ENCODE measurements at regions of chr5 and their contacts with region 1.

Region 1: DNA sequence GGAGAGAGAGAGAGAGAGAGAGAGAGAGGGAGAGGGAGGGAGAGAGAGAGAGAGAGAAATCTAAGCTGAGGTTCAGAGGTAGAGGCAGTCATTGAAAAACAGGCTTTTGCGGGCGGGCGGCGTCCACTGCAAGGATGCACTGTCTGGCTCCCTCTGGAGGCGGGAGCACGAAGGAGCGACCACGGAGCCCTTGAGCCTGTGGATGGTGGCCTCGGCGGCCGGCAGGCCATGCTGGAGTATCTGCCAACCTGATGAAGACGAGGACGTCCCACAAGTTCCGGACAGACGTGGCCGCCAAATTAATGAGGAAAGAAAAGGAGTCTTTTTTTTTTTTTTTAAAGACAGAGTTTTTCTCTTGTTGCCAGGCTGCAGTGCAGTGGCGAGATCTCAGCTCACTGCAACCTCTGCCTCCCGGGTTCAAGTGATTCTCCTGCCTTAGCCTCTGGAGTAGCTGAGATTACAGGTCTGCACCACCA is 2.2 kb upstream of the CCDC125 start:
- DNase-seq: peak; percentile 91 to 92
- H3K4me3 ChIP-seq: no peak overlapping the region
- H3K4me3 Mint-ChIP-seq: peak overlapping the region; percentile 7
- H3K27ac Mint-ChIP-seq: peak overlapping the region; percentile 19
- H3K4me1 ChIP-seq: peaks cover 30% of the 10 kb centered on the region
- H3K4me1 Mint-ChIP-seq: peaks cover 26% of the 10 kb centered on the region
- H3K27me3 ChIP-seq: no peaks in the 10 kb centered on the region
- H3K27me3 Mint-ChIP-seq: no peaks in the 10 kb centered on the region
- CTCF ChIP-seq: peak; percentile 80 to 95

Region 2: GRCh38 chr5:69024241-69024651 is 310.6 kb before region 1 on chr5:
- CTCF ChIA-PET with region 1: interaction called, 5 read pairs
- POLR2A ChIA-PET with region 1: no interaction called
- intact Hi-C with region 1: loop called (anchors 5 kb)
- DNase-seq: peak in 1 of 2 experiments; percentile 50
- H3K4me3 ChIP-seq: no peak overlapping the region
- H3K4me3 Mint-ChIP-seq: no peak overlapping the region
- H3K27ac Mint-ChIP-seq: no peak overlapping the region
- H3K4me1 ChIP-seq: no peaks in the 10 kb centered on the region
- H3K4me1 Mint-ChIP-seq: no peaks in the 10 kb centered on the region
- H3K27me3 ChIP-seq: no peaks in the 10 kb centered on the region
- H3K27me3 Mint-ChIP-seq: peaks cover 9% of the 10 kb centered on the region
- CTCF ChIP-seq: peak; percentile 59 to 72

Region 3: GRCh38 chr5:69189162-69190086 is 145.4 kb before region 1 on chr5 and contains the start of gene CENPH:
- CTCF ChIA-PET with region 1: interaction called, 4 read pairs
- POLR2A ChIA-PET with region 1: interaction called, 4 read pairs
- intact Hi-C with region 1: loop called (anchors 1 kb)
- DNase-seq: peak; percentile 93 to 96
- H3K4me3 ChIP-seq: peak within 1 kb of the TSS; percentile 87
- H3K4me3 Mint-ChIP-seq: peak within 1 kb of the TSS; percentile 96
- H3K27ac Mint-ChIP-seq: peak within 1 kb of the TSS; percentile 100
- H3K4me1 ChIP-seq: no peaks in the 10 kb centered on the region
- H3K4me1 Mint-ChIP-seq: no peaks in the 10 kb centered on the region
- H3K27me3 ChIP-seq: no peaks in the 10 kb centered on the region
- H3K27me3 Mint-ChIP-seq: no peaks in the 10 kb centered on the region
- CTCF ChIP-seq: no peak
- total RNA-seq, gene CENPH: 30.2 and 32.4 TPM in 2 replicates

Region 4: DNA sequence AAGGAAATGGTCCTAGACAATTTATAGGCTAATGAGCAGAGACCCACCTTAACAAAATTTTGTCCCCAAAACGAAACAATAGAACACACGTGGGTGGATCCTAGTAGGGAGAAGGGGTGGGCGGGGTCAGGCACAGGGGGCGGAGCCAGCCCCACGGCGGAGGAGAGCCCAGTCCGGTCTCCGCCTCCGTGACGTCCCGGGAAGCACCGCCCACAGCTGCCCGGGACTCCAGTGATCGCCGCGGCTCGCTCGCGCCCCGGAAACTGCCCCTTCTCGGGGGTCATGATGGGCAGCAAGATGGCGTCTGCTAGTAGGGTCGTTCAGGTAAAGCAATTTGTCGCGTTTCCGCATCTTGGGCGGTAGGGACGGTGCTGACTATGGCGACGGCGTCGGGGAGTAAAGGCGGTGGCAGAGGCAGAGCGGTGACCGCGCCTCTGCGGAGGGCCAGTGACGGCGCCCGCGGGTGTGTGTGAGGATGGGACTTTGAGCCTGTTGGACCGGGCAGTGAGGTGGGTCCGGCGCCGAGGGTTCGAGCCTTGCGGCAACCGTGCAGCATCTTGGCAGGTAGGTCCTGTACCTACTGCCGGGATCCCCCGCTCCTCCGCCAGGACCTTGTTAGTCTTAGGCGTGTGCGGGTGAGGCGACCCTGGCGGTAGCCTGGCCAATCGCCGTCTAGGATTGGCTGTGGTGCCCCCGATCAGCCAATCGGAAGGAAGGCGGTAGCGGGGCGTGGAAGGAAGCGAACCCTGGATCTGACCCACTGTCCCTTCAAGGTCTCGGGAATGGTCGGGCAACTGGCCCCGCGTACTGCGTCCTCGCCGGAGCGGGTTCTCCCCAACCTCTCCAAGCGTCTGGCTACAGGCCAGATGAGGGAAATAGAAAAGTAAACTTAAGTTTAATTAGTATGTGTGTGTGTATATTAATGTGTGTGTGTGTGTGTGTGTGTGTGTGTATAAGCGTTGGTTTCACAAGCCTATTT is 117.0 kb before region 1 on chr5:
- CTCF ChIA-PET with region 1: no interaction called
- POLR2A ChIA-PET with region 1: no interaction called
- intact Hi-C with region 1: loop called (anchors 5 kb)
- DNase-seq: peak; percentile 95 to 97
- H3K4me3 ChIP-seq: peak overlapping the region; percentile 82
- H3K4me3 Mint-ChIP-seq: peak overlapping the region; percentile 97
- H3K27ac Mint-ChIP-seq: peak overlapping the region; percentile 96
- H3K4me1 ChIP-seq: peaks cover 16% of the 10 kb centered on the region
- H3K4me1 Mint-ChIP-seq: peaks cover 8% of the 10 kb centered on the region
- H3K27me3 ChIP-seq: no peaks in the 10 kb centered on the region
- H3K27me3 Mint-ChIP-seq: no peaks in the 10 kb centered on the region
- CTCF ChIP-seq: peak; percentile 24 to 41

Region 5: GRCh38 chr5:69234457-69235268 is 100.2 kb before region 1 on chr5 and contains the start of gene CDK7:
- CTCF ChIA-PET with region 1: interaction called, 8 read pairs
- POLR2A ChIA-PET with region 1: interaction called, 5 read pairs
- intact Hi-C with region 1: loop called (anchors 1 kb)
- DNase-seq: peak; percentile 92 to 94
- H3K4me3 ChIP-seq: peak within 1 kb of the TSS; percentile 93
- H3K4me3 Mint-ChIP-seq: peak within 1 kb of the TSS; percentile 83
- H3K27ac Mint-ChIP-seq: peak within 1 kb of the TSS; percentile 77
- H3K4me1 ChIP-seq: peaks cover 14% of the 10 kb centered on the region
- H3K4me1 Mint-ChIP-seq: peaks cover 18% of the 10 kb centered on the region
- H3K27me3 ChIP-seq: no peaks in the 10 kb centered on the region
- H3K27me3 Mint-ChIP-seq: no peaks in the 10 kb centered on the region
- CTCF ChIP-seq: no peak
- total RNA-seq, gene CDK7: 82.4 and 90.5 TPM in 2 replicates

Region 6: DNA sequence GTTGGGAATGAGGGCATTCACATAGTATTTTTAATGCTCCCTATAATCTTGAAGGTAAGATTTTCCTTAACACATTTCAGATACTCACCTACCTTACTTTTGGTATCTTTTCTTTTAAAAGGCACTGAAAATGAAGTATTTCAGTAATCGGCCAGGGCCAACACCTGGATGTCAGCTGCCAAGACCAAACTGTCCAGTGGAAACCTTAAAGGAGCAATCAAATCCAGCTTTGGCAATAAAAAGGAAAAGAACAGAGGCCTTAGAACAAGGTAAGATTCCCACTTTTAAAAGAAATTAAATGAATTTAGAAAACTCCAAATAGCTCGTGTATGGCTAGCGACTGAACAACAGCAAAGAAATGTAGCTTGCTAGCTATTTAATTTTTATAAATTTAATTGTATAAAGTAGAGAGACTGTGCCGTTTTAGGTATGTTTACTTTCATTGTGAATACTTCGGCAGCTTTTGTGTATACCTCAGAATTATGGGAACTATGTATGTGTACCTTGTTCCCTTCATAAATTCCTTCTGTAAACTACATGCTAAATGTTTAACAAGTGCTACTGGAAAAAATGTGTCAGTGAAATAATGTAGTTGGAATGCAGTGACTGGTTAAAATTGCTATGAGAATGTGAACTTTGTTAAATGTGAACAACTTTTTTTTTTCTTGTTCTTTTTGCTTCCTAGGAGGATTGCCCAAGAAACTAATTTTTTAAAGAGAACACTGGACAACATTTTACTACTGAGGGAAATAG is 58.2 kb before region 1 on chr5:
- CTCF ChIA-PET with region 1: interaction called, 5 read pairs
- POLR2A ChIA-PET with region 1: interaction called, 5 read pairs
- intact Hi-C with region 1: loop called (anchors 2 kb)
- DNase-seq: peak in 1 of 2 experiments; percentile 51
- H3K4me3 ChIP-seq: no peak overlapping the region
- H3K4me3 Mint-ChIP-seq: peak overlapping the region; percentile 61
- H3K27ac Mint-ChIP-seq: peak overlapping the region; percentile 90
- H3K4me1 ChIP-seq: peaks cover 26% of the 10 kb centered on the region
- H3K4me1 Mint-ChIP-seq: peaks cover 5% of the 10 kb centered on the region
- H3K27me3 ChIP-seq: no peaks in the 10 kb centered on the region
- H3K27me3 Mint-ChIP-seq: no peaks in the 10 kb centered on the region
- CTCF ChIP-seq: no peak

Region 7: GRCh38 chr5:69293895-69294294 is 40.9 kb before region 1 on chr5:
- CTCF ChIA-PET with region 1: interaction called, 6 read pairs
- POLR2A ChIA-PET with region 1: interaction called, 4 read pairs
- intact Hi-C with region 1: loop called (anchors 2 kb)
- DNase-seq: peak; percentile 57 to 69
- H3K4me3 ChIP-seq: no peak overlapping the region
- H3K4me3 Mint-ChIP-seq: peak overlapping the region; percentile 27
- H3K27ac Mint-ChIP-seq: no peak overlapping the region
- H3K4me1 ChIP-seq: peaks cover 48% of the 10 kb centered on the region
- H3K4me1 Mint-ChIP-seq: peaks cover 30% of the 10 kb centered on the region
- H3K27me3 ChIP-seq: no peaks in the 10 kb centered on the region
- H3K27me3 Mint-ChIP-seq: no peaks in the 10 kb centered on the region
- CTCF ChIP-seq: no peak

Measured in Caco-2 (cell line).